Mammary epithelial cell (primary cell): ENCODE measurements at regions of chr15 and their contacts with region 1.

Region 1: GRCh38 chr15:60507596-60508424 is 28.9 kb upstream of the ICE2 start:
- DNase-seq: peak; percentile 68
- H3K4me3 ChIP-seq: no peak overlapping the region
- H3K27ac ChIP-seq: no peak overlapping the region
- H3K4me1 ChIP-seq: peaks cover 24% of the 10 kb centered on the region
- H3K27me3 ChIP-seq: no peaks in the 10 kb centered on the region
- CTCF ChIP-seq: peak; percentile 91 to 99

Region 2: DNA sequence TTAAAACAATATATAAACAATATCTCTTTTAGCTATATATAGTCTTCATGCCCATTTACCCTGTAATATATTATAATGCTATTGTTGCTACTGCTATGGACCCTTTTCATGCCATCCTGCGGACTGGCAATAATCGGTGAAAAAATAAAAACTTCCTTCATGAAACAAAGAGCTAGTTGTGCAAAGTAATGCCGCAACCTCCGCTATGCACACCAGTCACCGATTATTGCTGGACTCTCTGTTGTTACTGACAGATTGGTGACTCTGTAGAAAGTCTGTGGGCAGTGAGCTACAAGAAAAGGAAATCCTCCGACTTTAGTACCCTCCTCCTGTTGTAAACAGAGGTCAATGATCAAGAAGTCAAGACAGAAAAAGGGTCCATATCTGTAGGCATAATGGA is 11.0 kb before region 1 on chr15:
- CTCF ChIA-PET with region 1: interaction called, 18 read pairs
- dilution Hi-C with region 1: no loop called
- in situ Hi-C with region 1: no loop called
- intact Hi-C with region 1: no loop called
- DNase-seq: no peak
- H3K4me3 ChIP-seq: no peak overlapping the region
- H3K27ac ChIP-seq: no peak overlapping the region
- H3K4me1 ChIP-seq: no peaks in the 10 kb centered on the region
- H3K27me3 ChIP-seq: no peaks in the 10 kb centered on the region
- CTCF ChIP-seq: no peak

Region 3: GRCh38 chr15:60551781-60552161 is 44.0 kb after region 1 on chr15:
- CTCF ChIA-PET with region 1: no interaction called
- dilution Hi-C with region 1: no loop called
- in situ Hi-C with region 1: no loop called
- intact Hi-C with region 1: loop called (anchors 1 kb)
- DNase-seq: peak; percentile 5
- H3K4me3 ChIP-seq: no peak overlapping the region
- H3K27ac ChIP-seq: no peak overlapping the region
- H3K4me1 ChIP-seq: no peaks in the 10 kb centered on the region
- H3K27me3 ChIP-seq: no peaks in the 10 kb centered on the region
- CTCF ChIP-seq: peak; percentile 27 to 40

Region 4: DNA sequence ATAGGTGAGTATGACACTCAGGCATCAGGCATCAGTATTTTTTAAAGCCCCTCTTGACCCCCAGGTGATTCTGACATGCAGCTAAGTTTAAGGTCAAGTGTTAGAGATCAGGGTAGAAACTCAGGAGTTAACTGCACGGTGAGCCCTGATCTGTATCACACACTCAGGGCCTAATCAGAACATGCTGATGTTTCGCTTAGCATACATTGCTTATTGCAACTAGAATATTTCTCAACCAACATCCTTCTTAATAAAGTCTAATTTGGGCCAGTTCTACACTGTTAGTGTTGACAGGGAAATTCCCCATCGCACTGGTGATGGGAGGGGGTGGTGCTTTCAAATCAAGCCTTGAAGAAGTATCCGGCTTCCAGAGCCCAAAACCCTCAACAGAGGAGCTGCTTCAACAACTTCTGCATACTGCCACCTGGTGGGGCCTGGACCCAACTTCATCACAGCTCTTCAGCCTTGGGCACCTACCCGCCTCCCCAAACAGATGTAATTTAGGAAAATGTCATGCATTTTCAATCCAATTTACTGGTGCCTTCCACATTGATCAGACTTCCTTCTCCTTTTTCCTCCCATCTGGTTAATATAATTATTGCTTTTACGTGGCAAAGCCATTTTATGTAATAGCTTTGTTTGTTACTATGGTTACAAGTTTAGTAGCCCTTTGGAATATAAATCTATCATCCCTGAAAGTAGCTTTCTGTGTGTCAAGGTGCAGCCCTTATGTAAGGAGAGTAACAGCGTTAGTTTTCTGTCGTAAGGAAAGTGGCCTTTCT is 409.1 kb after region 1 on chr15:
- CTCF ChIA-PET with region 1: interaction called, 5 read pairs
- dilution Hi-C with region 1: no loop called
- in situ Hi-C with region 1: no loop called
- intact Hi-C with region 1: loop called (anchors 1 kb)
- DNase-seq: peak; percentile 57
- H3K4me3 ChIP-seq: no peak overlapping the region
- H3K27ac ChIP-seq: no peak overlapping the region
- H3K4me1 ChIP-seq: no peaks in the 10 kb centered on the region
- H3K27me3 ChIP-seq: no peaks in the 10 kb centered on the region
- CTCF ChIP-seq: peak; percentile 68 to 85

Region 5: GRCh38 chr15:61051569-61052031 is 543.8 kb after region 1 on chr15:
- CTCF ChIA-PET with region 1: interaction called, 6 read pairs
- dilution Hi-C with region 1: no loop called
- in situ Hi-C with region 1: no loop called
- intact Hi-C with region 1: loop called (anchors 10 kb)
- DNase-seq: peak; percentile 12
- H3K4me3 ChIP-seq: no peak overlapping the region
- H3K27ac ChIP-seq: no peak overlapping the region
- H3K4me1 ChIP-seq: no peaks in the 10 kb centered on the region
- H3K27me3 ChIP-seq: no peaks in the 10 kb centered on the region
- CTCF ChIP-seq: peak; percentile 31 to 59